ENCODE measurements at regions of chr9 and their contacts with region 1.

Region 1: GRCh38 chr9:100352727-100353505 is at the start of gene TEX10:
- DNase-seq: peak; percentile 86
- H3K4me3 ChIP-seq: peak within 1 kb of the TSS; percentile 97 to 99
- H3K27ac ChIP-seq: peak within 1 kb of the TSS; percentile 78 to 83
- H3K4me1 ChIP-seq: peaks cover 2% of the 10 kb centered on the region
- H3K27me3 ChIP-seq: no peaks in the 10 kb centered on the region
- CTCF ChIP-seq: peak in 2 of 4 experiments; percentile 5 to 13
- POLR2A ChIP-seq: peak; percentile 67
- total RNA-seq, gene TEX10: 17.3 to 32.1 TPM

Region 2: GRCh38 chr9:100426530-100427428 is 73.9 kb after region 1 on chr9 and contains the start of gene MSANTD3:
- intact Hi-C with region 1: loop called (anchors 5 kb)
- DNase-seq: peak; percentile 58
- H3K4me3 ChIP-seq: peak within 1 kb of the TSS; percentile 86 to 87
- H3K27ac ChIP-seq: peak within 1 kb of the TSS; percentile 85 to 88
- H3K4me1 ChIP-seq: no peaks in the 10 kb centered on the region
- H3K27me3 ChIP-seq: no peaks in the 10 kb centered on the region
- CTCF ChIP-seq: peak in 2 of 4 experiments; percentile 21 to 46
- POLR2A ChIP-seq: peak; percentile 55
- total RNA-seq, gene MSANTD3: 17.3 to 24.5 TPM

Measured in prostate gland (tissue), 2 donors.